ENCODE measurements at regions of chr7 and their contacts with region 1.

Region 1: DNA sequence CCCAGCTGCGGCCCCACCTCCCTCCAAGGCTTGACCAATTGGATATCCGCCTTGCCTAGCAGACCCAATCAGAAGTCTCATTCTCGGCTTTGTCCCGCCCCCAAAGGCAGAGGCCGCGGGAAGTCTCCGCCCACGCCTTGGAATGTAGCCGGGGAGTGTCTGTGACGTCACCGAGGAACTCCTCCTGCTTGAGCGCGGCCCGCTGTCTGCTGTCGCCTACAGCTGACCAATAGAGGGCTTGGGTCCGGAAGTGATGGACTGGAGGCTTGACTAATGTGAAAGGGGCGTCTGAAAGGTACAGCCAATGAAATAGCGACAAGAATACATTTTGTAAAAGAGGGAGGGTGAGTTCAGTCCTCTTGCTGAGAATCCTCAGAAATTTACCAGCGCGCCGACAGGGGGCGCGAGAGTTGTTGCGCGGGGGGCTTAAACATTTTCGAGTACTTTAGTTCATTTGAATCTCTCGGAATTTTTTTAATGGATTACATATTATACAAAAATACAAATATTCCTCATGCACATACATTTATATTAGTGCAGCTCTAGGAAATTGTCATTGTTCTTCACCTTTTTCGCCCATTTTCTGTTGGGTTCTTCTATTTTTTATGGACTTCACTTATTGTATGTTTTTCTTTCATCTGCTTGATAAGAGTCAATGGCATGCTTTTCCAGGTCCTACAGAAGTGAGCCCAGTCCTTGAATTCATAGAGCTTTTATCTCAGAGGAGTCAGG is 376 bp upstream of the CREB3L2 start:
- DNase-seq: peak; percentile 89 to 100 (median 98)
- ATAC-seq: peak; percentile 90 to 93
- H3K4me3 Mint-ChIP-seq: peak overlapping the region; percentile 89 to 96 (median 94)
- H3K27ac Mint-ChIP-seq: peak overlapping the region; percentile 63 to 96 (median 92)
- H3K4me1 Mint-ChIP-seq: peaks cover 17 to 44% (median 34%) of the 10 kb centered on the region in 4 donors
- H3K27me3 Mint-ChIP-seq: no peaks in the 10 kb centered on the region

Region 2: DNA sequence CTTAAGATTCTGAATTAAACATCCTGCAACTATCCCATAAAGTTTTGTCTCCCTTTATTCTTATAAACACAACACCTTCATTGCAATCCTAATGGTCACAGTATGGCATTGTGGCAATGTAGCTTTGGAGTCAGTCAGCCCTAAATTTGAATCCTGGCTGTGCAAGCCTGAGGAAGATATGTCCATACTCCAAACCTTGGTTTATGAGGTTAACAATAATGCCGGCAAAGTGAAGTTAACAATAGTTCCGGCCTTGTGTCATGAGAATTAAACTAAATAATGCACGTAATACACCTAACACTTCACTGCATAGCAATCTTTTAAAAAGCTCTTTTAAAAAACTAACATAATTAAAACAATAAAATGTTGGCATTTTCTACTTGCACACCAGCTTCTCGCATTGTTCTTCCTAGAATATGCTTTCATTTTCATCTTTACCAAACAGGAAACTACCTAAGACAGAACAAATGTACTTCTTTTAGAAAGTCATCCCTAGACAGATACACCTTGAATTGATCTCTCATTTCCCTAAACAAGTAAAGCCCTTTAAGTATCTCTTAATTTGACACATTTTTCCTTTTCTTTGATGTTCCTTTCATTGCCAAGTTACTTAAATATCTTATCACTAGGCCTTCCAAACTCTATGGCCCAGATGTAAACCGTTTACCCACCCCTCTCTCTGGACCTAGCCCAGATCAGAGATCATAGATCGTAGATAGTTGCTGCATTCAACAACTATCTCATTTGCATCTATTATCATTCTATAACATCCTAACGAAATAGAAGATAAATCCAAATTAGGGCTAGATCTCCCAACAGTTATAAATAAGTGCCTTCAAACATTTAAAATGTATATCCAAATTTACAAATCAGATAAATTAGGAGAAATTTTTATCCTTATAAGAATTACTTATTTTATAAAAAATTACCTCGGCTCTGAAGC is 67.0 kb before region 1 on chr7:
- POLR2A ChIA-PET with region 1: interaction called, 11 read pairs
- DNase-seq: peak in 3 of 10 donors; percentile 28 to 45 (median 31)
- ATAC-seq: peak; percentile 88 to 89
- H3K4me3 Mint-ChIP-seq: peak overlapping the region; percentile 73 to 91 (median 85)
- H3K27ac Mint-ChIP-seq: peak overlapping the region; percentile 87 to 98 (median 96)
- H3K4me1 Mint-ChIP-seq: peaks cover 19 to 46% (median 42%) of the 10 kb centered on the region in 4 donors
- H3K27me3 Mint-ChIP-seq: no peaks in the 10 kb centered on the region

Measured in naive thymus-derived CD8-positive, alpha-beta T cell (primary cell).